Activated CD4-positive, alpha-beta T cell treated with anti-CD3 and anti-CD28 coated beads, Interleukin-2, amount 10 ng/mL, durations not matched to agents 24 days and 14 days (primary cell): ENCODE measurements at regions of chr2 and their contacts with region 1.

Region 1: GRCh38 chr2:108607706-108608301 is 73.5 kb downstream of the LIMS1 start:
- DNase-seq: peak; percentile 83
- H3K4me3 Mint-ChIP-seq: no peak overlapping the region
- H3K27ac Mint-ChIP-seq: no peak overlapping the region
- H3K4me1 Mint-ChIP-seq: peaks cover 65% of the 10 kb centered on the region
- H3K27me3 Mint-ChIP-seq: no peaks in the 10 kb centered on the region

Region 2: GRCh38 chr2:108594132-108594981 is 13.4 kb before region 1 on chr2:
- intact Hi-C with region 1: loop called (anchors 1 kb)
- DNase-seq: peak; percentile 65
- H3K4me3 Mint-ChIP-seq: peak overlapping the region; percentile 83
- H3K27ac Mint-ChIP-seq: peak overlapping the region; percentile 92
- H3K4me1 Mint-ChIP-seq: peaks cover 52% of the 10 kb centered on the region
- H3K27me3 Mint-ChIP-seq: no peaks in the 10 kb centered on the region

Region 3: DNA sequence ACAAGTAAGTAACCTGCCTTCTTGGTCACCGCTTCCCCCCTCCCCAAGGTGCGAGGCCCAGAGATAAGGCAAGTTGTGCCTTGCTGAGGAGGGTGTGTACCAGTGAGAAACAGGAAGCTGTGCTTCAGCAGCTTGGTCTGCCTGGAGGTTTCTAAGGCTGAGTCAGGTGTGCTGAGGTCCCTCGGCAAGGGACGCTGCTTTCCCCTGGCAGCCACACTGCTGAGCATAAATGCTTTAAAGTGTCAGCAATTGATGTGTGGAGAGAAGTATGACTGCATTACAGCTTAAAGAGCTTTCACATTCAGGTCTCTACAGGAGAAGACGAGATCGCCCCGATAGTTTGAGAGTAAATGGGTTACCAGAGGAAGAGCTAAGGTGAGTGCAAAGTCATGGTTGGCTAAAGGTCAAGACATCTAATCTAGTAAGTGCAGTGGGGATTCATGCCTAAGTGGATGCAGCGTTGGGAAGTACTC is 13.3 kb after region 1 on chr2:
- intact Hi-C with region 1: loop called (anchors 1 kb)
- DNase-seq: peak; percentile 93
- H3K4me3 Mint-ChIP-seq: peak overlapping the region; percentile 88
- H3K27ac Mint-ChIP-seq: peak overlapping the region; percentile 97
- H3K4me1 Mint-ChIP-seq: peaks cover 68% of the 10 kb centered on the region
- H3K27me3 Mint-ChIP-seq: no peaks in the 10 kb centered on the region

Region 4: DNA sequence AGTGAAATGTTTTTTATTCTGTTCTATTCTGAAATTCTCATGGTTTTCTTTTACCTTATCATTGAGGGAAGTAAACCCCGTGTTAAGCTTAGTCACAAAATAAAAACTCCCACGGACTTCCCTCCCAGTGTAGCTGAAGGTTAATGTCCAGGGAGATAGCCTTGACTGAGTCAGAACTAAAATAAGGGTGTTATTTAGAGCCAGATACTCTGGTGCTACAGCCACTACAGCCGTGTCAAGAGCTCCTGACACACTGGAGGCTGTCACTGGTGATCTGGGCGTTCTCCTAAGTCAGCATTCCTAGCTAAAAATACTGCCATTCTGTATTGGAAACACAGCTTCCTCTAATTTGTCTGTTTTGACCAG is 29.5 kb after region 1 on chr2:
- intact Hi-C with region 1: loop called (anchors 1 kb)
- DNase-seq: no peak
- H3K4me3 Mint-ChIP-seq: peak overlapping the region; percentile 45
- H3K27ac Mint-ChIP-seq: peak overlapping the region; percentile 79
- H3K4me1 Mint-ChIP-seq: peaks cover 60% of the 10 kb centered on the region
- H3K27me3 Mint-ChIP-seq: no peaks in the 10 kb centered on the region